Dorsolateral prefrontal cortex (tissue), 120 donors: ENCODE measurements at regions of chr1 and their contacts with region 1.

Region 1: DNA sequence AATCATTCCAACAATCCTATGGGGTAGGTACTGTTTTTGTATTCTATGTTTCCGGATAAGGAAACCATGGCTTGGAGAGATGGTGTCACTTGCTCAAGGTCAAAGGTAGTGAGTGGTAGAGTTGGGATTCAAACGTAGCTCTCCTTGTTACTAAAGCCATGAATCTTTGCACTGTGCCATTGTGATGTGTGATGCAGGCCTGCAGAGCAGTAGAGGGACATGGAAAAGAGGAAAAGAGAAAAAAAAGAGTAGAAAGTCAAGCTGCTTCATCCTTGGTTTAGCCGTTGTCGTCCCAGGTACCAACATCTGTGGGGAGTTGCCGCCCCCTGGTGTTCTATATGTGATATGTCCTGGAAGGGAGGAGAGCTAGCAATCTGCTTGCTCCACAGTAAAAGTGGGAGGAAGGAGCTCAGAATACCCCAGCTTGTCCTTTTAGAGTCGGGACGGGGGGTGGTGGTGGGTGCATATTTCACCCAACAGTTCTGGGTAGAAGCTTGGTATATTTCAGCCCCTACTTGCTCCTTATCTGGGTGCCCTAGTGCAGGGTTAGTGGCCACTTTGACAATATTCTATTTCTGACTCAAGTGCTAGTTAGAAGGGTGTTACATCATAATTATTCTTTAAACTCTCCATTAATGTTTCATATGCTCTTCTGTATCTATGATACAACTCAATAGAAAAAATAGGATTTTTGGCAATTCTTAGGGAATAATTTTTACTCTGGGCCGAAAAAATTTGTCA is 98.4 kb downstream of the EBNA1BP2 start:
- DNase-seq: peak; percentile 65 to 89 (median 80)
- H3K4me3 ChIP-seq: peak overlapping the region in 1 of 59 donors; percentile 4
- H3K27ac ChIP-seq: peak overlapping the region in 14 of 59 donors; percentile 10 to 68 (median 38)
- H3K27me3 ChIP-seq: no peaks in the 10 kb centered on the region
- CTCF ChIP-seq: peak; percentile 82 to 97 (median 92)

Region 2: GRCh38 chr1:42576935-42577334 is 496.7 kb before region 1 on chr1:
- intact Hi-C with region 1: loop called (anchors 5 to 10 kb)
- DNase-seq: no peak
- H3K4me3 ChIP-seq: no peak overlapping the region
- H3K27ac ChIP-seq: no peak overlapping the region
- H3K27me3 ChIP-seq: no peaks in the 10 kb centered on the region
- CTCF ChIP-seq: no peak

Region 3: GRCh38 chr1:42777852-42778251 is 295.8 kb before region 1 on chr1:
- intact Hi-C with region 1: loop called (anchors 1 to 5 kb)
- DNase-seq: peak in 2 of 10 donors; percentile 48 to 56
- H3K4me3 ChIP-seq: no peak overlapping the region
- H3K27ac ChIP-seq: no peak overlapping the region
- H3K27me3 ChIP-seq: no peaks in the 10 kb centered on the region
- CTCF ChIP-seq: peak; percentile 27 to 79 (median 71)